ENCODE measurements at regions of chr1 and their contacts with region 1.

Region 1: GRCh38 chr1:44377925-44378784 is 23.1 kb upstream of the ERI3 start:
- DNase-seq: no peak
- ATAC-seq: no peak

Region 2: GRCh38 chr1:44405041-44405797 is 27.1 kb after region 1 on chr1 and contains the start of gene RNF220:
- intact Hi-C with region 1: no loop called
- DNase-seq: peak; percentile 75
- ATAC-seq: peak; percentile 80
- total RNA-seq, gene RNF220: 76.4 TPM

Region 3: GRCh38 chr1:44594871-44595746 is 217.0 kb after region 1 on chr1:
- intact Hi-C with region 1: loop called (anchors 1 kb)
- DNase-seq: peak; percentile 94
- ATAC-seq: peak; percentile 91